Common myeloid progenitor, CD34-positive (primary cell): ENCODE measurements at regions of chr17 and their contacts with region 1.

Region 1: GRCh38 chr17:76005263-76006149 is 4.9 kb downstream of the CDK3 start:
- DNase-seq: peak; percentile 61 to 82 (median 82)
- H3K4me3 ChIP-seq: no peak overlapping the region
- H3K27ac ChIP-seq: no peak overlapping the region
- H3K4me1 ChIP-seq: peaks cover 0 to 9% (median 6%) of the 10 kb centered on the region in 4 experiments
- H3K27me3 ChIP-seq: no peaks in the 10 kb centered on the region

Region 2: DNA sequence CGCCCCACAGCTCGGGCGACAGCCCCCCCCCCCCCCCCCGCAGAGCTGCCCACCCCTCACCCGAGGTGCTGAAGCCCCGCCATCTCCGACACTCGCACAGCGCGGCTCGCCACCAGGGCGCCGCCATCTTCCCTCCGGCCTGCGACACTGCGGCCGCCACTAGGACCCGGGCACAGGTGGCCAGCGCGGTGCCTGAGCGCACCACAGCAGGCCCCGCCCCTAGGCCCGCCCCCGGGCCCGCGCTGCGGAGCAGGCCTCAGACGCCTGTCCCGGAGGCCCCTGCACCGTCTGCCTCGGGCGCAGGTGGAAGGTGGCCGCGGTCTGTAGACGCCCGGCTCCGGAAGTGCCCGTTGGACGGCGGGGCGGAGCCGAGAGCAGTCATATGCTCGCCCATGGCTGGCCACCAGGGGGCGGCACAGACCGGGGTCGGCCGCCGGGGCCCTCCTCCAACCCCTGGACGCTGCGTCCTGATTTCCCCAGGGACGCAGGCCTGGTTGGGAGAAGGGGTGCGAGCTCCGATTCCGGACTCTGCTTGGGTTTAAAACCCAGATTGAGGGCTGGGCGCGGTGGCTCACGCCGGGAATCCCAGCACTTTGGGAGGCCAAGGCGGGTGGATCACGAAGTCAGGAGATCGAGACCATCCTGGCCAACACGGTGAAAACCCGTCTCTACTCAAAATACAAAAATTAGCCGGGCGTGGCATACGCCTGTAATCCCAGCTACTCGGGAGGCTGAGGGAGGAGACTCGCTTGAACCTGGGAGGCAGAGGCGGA is 100.6 kb before region 1 on chr17 and contains the start of gene MRPL38:
- CTCF ChIA-PET with region 1: interaction called, 47 read pairs
- POLR2A ChIA-PET with region 1: interaction called, 3 read pairs
- DNase-seq: peak; percentile 95 to 98 (median 97)
- H3K4me3 ChIP-seq: peak within 1 kb of the TSS; percentile 71 to 91 (median 87)
- H3K27ac ChIP-seq: peak within 1 kb of the TSS; percentile 77 to 80
- H3K4me1 ChIP-seq: peaks cover 0 to 31% (median 22%) of the 10 kb centered on the region in 4 experiments
- H3K27me3 ChIP-seq: no peaks in the 10 kb centered on the region

Region 3: DNA sequence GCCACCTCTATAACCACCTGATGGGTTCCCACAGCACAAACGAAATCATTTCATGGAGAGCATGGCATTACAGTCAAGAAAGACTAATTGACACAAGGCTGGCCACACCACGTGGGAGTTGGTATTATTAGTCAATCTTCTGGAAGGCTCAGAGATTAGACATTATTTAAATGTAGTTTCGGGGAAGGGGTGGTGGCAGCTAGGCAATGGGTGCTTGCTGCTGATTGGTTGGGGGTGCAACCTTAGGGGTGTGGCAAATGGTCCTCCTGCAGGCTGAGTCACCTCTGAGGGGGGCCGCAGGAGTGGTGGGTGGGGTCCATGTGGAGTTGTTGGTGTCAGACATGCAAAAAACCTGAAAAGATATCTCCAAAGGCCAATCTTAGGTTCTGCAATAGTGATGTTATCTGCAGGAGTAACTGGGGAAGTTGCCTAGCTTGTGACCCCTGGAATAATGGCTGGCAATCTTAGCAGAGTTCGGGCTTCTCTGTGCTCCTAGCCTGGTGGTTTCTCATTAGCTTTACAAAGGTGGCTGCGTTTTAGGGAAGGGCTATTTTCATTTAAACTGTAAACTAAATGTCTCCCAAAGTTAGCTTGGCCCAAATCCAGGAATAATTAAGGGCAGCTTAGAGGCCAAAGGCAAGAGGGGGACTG is 21.9 kb before region 1 on chr17:
- CTCF ChIA-PET with region 1: interaction called, 11 read pairs
- POLR2A ChIA-PET with region 1: interaction called, 4 read pairs
- DNase-seq: peak in 2 of 3 donors; percentile 35 to 45
- H3K4me3 ChIP-seq: no peak overlapping the region
- H3K27ac ChIP-seq: no peak overlapping the region
- H3K4me1 ChIP-seq: peaks cover 0 to 21% (median 13%) of the 10 kb centered on the region in 4 experiments
- H3K27me3 ChIP-seq: no peaks in the 10 kb centered on the region

Region 4: DNA sequence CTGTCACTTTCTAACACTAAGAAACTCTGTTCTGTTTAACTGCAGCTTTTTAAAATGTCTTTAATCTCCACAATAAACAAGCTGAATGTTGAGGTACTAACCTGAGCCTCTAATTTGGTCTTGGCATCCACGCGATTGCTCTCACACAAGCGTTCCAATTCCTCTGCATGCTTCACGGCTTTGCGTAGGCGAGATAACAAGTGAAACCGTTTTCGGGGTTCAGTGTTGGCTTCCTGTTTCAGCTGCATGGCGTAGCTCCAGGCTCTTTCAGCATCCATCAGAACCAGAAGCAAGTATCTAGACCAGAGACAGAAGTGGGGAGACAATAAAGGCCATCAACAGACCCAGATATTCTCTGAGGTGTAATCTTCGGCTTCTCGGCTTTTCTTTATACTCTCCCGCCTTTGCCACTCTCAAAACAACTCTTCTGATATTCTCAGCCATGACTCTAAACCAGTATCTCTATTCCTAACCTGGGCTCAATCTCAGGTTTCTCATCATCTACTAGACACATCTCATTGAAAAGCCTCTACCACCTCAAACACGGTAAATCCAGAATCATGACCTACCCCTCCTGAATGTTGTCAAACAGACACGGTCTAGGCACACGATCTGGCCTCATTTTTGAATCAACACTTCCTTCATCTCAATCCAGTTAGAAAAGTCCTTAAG is 58.5 kb after region 1 on chr17:
- CTCF ChIA-PET with region 1: interaction called, 16 read pairs
- POLR2A ChIA-PET with region 1: no interaction called
- DNase-seq: peak in 1 of 3 donors; percentile 24
- H3K4me3 ChIP-seq: no peak overlapping the region
- H3K27ac ChIP-seq: no peak overlapping the region
- H3K4me1 ChIP-seq: peaks cover 0 to 4% (median 0%) of the 10 kb centered on the region in 4 experiments
- H3K27me3 ChIP-seq: no peaks in the 10 kb centered on the region